ENCODE measurements at regions of chr10 and their contacts with region 1.

Region 1: DNA sequence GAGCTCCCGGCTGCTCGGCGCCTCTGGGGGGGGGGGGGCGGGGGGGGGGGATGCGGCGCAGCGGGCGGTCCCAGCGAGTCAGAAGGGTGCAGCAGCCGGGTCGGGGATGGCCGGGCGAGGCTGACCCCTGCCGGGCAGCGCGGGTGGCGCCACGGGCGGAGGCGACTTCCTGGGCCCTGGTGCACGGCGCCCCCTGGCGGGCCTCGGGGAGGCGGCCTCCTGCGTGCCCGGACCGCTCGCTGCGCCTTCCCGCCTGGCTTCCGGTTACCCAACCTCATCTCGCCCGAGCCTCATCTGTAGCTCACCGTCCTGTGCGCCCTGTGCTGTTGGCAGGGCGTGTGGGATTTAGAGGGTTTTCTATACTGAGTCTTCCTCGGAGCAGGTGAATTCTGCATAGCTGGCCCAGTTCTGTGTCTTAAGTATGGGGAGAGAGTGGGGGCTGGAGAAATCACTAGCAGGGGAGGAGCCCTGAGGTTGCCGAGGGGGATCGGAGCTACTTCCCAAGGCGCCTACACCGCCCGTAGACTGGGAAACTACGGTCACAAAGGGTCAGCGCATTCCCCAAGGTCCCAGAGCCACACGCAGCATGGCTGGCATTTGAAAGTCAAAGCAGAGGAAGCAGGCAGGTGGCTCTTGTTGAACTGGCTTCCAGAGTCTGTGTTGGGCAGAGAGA is 28.3 kb upstream of the WDFY4 start:
- DNase-seq: peak; percentile 93
- H3K4me3 ChIP-seq: peak overlapping the region; percentile 67
- H3K27ac ChIP-seq: no peak overlapping the region
- H3K4me1 ChIP-seq: peaks cover 26% of the 10 kb centered on the region
- CTCF ChIP-seq: peak; percentile 96

Region 2: GRCh38 chr10:48444266-48444665 is 212.1 kb before region 1 on chr10:
- CTCF ChIA-PET with region 1: interaction called, 7 read pairs
- POLR2A ChIA-PET with region 1: no interaction called
- intact Hi-C with region 1: loop called (anchors 1 kb)
- DNase-seq: peak; percentile 16
- H3K4me3 ChIP-seq: no peak overlapping the region
- H3K27ac ChIP-seq: no peak overlapping the region
- H3K4me1 ChIP-seq: no peaks in the 10 kb centered on the region
- CTCF ChIP-seq: peak; percentile 50; the same call in 1 of the 2 replicates

Region 3: GRCh38 chr10:48577158-48577557 is 79.2 kb before region 1 on chr10:
- CTCF ChIA-PET with region 1: interaction called, 30 read pairs
- POLR2A ChIA-PET with region 1: interaction called, 10 read pairs
- intact Hi-C with region 1: no loop called
- DNase-seq: peak; percentile 84
- H3K4me3 ChIP-seq: peak overlapping the region; percentile 21
- H3K27ac ChIP-seq: peak overlapping the region; percentile 95
- H3K4me1 ChIP-seq: peaks cover 92% of the 10 kb centered on the region
- CTCF ChIP-seq: no peak

Region 4: GRCh38 chr10:48614481-48615390 is 41.6 kb before region 1 on chr10:
- CTCF ChIA-PET with region 1: interaction called, 12 read pairs
- POLR2A ChIA-PET with region 1: no interaction called
- intact Hi-C with region 1: no loop called
- DNase-seq: no peak
- H3K4me3 ChIP-seq: no peak overlapping the region
- H3K27ac ChIP-seq: no peak overlapping the region
- H3K4me1 ChIP-seq: no peaks in the 10 kb centered on the region
- CTCF ChIP-seq: peak; percentile 80

Region 5: GRCh38 chr10:48802611-48803071 is 146.3 kb after region 1 on chr10:
- CTCF ChIA-PET with region 1: no interaction called
- POLR2A ChIA-PET with region 1: no interaction called
- intact Hi-C with region 1: loop called (anchors 5 kb)
- DNase-seq: peak; percentile 46
- H3K4me3 ChIP-seq: no peak overlapping the region
- H3K27ac ChIP-seq: peak overlapping the region; percentile 7
- H3K4me1 ChIP-seq: peaks cover 34% of the 10 kb centered on the region
- CTCF ChIP-seq: no peak

Region 6: GRCh38 chr10:48833674-48834073 is 177.3 kb after region 1 on chr10:
- CTCF ChIA-PET with region 1: no interaction called
- POLR2A ChIA-PET with region 1: no interaction called
- intact Hi-C with region 1: no loop called
- DNase-seq: no peak
- H3K4me3 ChIP-seq: no peak overlapping the region
- H3K27ac ChIP-seq: no peak overlapping the region
- H3K4me1 ChIP-seq: no peaks in the 10 kb centered on the region
- CTCF ChIP-seq: no peak

Region 7: GRCh38 chr10:49164559-49165188 is 508.3 kb after region 1 on chr10:
- CTCF ChIA-PET with region 1: interaction called, 5 read pairs
- POLR2A ChIA-PET with region 1: no interaction called
- intact Hi-C with region 1: loop called (anchors 1 kb)
- DNase-seq: peak; percentile 92
- H3K4me3 ChIP-seq: no peak overlapping the region
- H3K27ac ChIP-seq: no peak overlapping the region
- H3K4me1 ChIP-seq: peaks cover 15% of the 10 kb centered on the region
- CTCF ChIP-seq: peak; percentile 98

Region 8: DNA sequence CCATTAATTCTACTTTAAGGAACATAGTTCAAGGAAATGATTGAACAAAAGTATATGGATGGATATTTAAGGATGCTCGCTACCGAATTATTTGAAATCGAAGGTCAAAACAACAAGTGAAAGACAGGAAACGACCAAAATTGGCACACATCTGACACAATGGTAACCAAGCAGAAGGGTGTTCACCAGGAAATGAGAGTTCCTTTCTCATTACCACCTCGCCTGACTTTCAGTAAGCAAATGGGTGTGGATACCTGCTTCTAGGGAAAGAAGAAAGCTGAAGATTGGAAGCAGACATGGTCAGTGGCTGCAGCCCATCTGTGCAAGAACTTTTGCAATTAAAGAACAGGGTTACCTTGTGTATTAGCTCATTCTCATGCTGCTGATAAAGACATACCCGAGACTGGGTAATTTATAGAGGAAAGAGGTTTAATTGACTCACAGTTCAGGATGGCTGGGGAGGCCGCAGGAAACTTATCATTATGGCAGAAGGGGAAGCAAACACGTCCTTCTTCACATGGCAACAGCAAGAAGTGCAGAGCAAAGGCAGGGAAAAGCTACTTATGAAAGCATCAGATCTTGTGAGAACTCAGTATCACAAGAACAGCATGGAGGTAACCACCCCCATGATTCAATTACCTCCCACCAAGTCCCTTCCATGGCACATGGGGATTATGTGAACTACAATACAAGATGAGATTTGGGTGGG is 538.0 kb after region 1 on chr10:
- CTCF ChIA-PET with region 1: no interaction called
- POLR2A ChIA-PET with region 1: no interaction called
- intact Hi-C with region 1: no loop called
- DNase-seq: peak; percentile 41
- H3K4me3 ChIP-seq: peak overlapping the region; percentile 30
- H3K27ac ChIP-seq: no peak overlapping the region
- H3K4me1 ChIP-seq: peaks cover 38% of the 10 kb centered on the region
- CTCF ChIP-seq: no peak

Region 9: GRCh38 chr10:49207113-49207512 is 550.7 kb after region 1 on chr10:
- CTCF ChIA-PET with region 1: no interaction called
- POLR2A ChIA-PET with region 1: no interaction called
- intact Hi-C with region 1: no loop called
- DNase-seq: no peak
- H3K4me3 ChIP-seq: no peak overlapping the region
- H3K27ac ChIP-seq: no peak overlapping the region
- H3K4me1 ChIP-seq: no peaks in the 10 kb centered on the region
- CTCF ChIP-seq: no peak

Region 10: GRCh38 chr10:49512121-49512809 is 855.9 kb after region 1 on chr10:
- CTCF ChIA-PET with region 1: interaction called, 4 read pairs
- POLR2A ChIA-PET with region 1: no interaction called
- intact Hi-C with region 1: loop called (anchors 2 kb)
- DNase-seq: peak; percentile 56
- H3K4me3 ChIP-seq: no peak overlapping the region
- H3K27ac ChIP-seq: no peak overlapping the region
- H3K4me1 ChIP-seq: no peaks in the 10 kb centered on the region
- CTCF ChIP-seq: peak; percentile 88

Measured in OCI-LY7 (cell line).